CD14-positive monocyte (primary cell): ENCODE measurements at regions of chr6 and their contacts with region 1.

Region 1: GRCh38 chr6:133973109-133973971 is 20.3 kb downstream of the TBPL1 start:
- DNase-seq: peak; percentile 23 to 58 (median 45)
- H3K4me3 ChIP-seq: no peak overlapping the region
- H3K4me3 Mint-ChIP-seq: no peak overlapping the region
- H3K27ac ChIP-seq: no peak overlapping the region
- H3K27ac Mint-ChIP-seq: no peak overlapping the region
- H3K4me1 ChIP-seq: peaks cover 4 to 8% of the 10 kb centered on the region in 2 donors
- H3K4me1 Mint-ChIP-seq: peaks cover 16% of the 10 kb centered on the region
- H3K27me3 ChIP-seq: no peaks in the 10 kb centered on the region
- H3K27me3 Mint-ChIP-seq: peaks cover 0 to 2% (median 0%) of the 10 kb centered on the region in 3 donors
- CTCF ChIP-seq: peak; percentile 85

Region 2: GRCh38 chr6:133865680-133866079 is 107.7 kb before region 1 on chr6:
- intact Hi-C with region 1: no loop called
- DNase-seq: no peak
- H3K4me3 ChIP-seq: no peak overlapping the region
- H3K4me3 Mint-ChIP-seq: no peak overlapping the region
- H3K27ac ChIP-seq: no peak overlapping the region
- H3K27ac Mint-ChIP-seq: no peak overlapping the region
- H3K4me1 ChIP-seq: no peaks in the 10 kb centered on the region
- H3K4me1 Mint-ChIP-seq: no peaks in the 10 kb centered on the region
- H3K27me3 ChIP-seq: peaks cover 0 to 5% of the 10 kb centered on the region in 2 donors
- H3K27me3 Mint-ChIP-seq: peaks cover 2 to 10% (median 8%) of the 10 kb centered on the region in 3 donors
- CTCF ChIP-seq: no peak

Region 3: DNA sequence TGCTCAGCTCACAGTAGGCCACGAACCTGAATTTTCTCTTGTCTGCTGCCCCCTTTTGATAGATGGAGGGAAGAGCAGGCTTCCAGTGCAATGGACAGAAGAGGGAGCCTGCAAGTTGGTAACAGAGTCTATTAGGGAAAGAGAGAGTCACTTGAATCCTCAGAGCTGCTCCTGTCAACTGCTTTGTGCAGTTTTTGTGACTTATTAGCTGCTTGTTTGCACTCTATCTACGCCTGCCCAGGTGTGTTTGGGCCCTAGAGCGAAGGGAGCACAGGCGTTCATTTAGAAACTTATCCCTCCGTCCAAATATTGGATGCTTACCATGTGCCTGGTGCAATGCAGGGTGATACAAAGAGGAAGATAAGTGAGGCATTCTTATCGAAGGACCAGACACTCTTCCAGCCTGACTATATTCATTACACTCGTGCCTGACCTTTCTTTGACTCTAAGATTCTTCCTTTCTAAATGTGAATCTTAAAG is 90.7 kb after region 1 on chr6:
- intact Hi-C with region 1: loop called (anchors 5 to 10 kb)
- DNase-seq: peak; percentile 55 to 63 (median 55)
- H3K4me3 ChIP-seq: no peak overlapping the region
- H3K4me3 Mint-ChIP-seq: no peak overlapping the region
- H3K27ac ChIP-seq: no peak overlapping the region
- H3K27ac Mint-ChIP-seq: no peak overlapping the region
- H3K4me1 ChIP-seq: no peaks in the 10 kb centered on the region
- H3K4me1 Mint-ChIP-seq: no peaks in the 10 kb centered on the region
- H3K27me3 ChIP-seq: no peaks in the 10 kb centered on the region
- H3K27me3 Mint-ChIP-seq: peaks cover 1 to 8% (median 5%) of the 10 kb centered on the region in 3 donors
- CTCF ChIP-seq: peak; percentile 83